ENCODE measurements at regions of chr21 and their contacts with region 1.

Region 1: GRCh38 chr21:37424396-37424795 is 57.8 kb downstream of the DYRK1A start:
- DNase-seq: no peak
- ATAC-seq: peak in 1 of 4 donors; percentile 24
- H3K4me3 ChIP-seq: no peak overlapping the region
- H3K27ac ChIP-seq: peak overlapping the region; percentile 56
- H3K4me1 ChIP-seq: peaks cover 74% of the 10 kb centered on the region
- H3K27me3 ChIP-seq: no peaks in the 10 kb centered on the region
- CTCF ChIP-seq: no peak

Region 2: GRCh38 chr21:37087188-37087587 is 337.2 kb before region 1 on chr21:
- intact Hi-C with region 1: no loop called
- DNase-seq: no peak
- ATAC-seq: peak; percentile 68 to 87 (median 79)
- H3K4me3 ChIP-seq: no peak overlapping the region
- H3K27ac ChIP-seq: peak overlapping the region; percentile 51
- H3K4me1 ChIP-seq: peaks cover 29% of the 10 kb centered on the region
- H3K27me3 ChIP-seq: no peaks in the 10 kb centered on the region
- CTCF ChIP-seq: peak; percentile 36

Region 3: DNA sequence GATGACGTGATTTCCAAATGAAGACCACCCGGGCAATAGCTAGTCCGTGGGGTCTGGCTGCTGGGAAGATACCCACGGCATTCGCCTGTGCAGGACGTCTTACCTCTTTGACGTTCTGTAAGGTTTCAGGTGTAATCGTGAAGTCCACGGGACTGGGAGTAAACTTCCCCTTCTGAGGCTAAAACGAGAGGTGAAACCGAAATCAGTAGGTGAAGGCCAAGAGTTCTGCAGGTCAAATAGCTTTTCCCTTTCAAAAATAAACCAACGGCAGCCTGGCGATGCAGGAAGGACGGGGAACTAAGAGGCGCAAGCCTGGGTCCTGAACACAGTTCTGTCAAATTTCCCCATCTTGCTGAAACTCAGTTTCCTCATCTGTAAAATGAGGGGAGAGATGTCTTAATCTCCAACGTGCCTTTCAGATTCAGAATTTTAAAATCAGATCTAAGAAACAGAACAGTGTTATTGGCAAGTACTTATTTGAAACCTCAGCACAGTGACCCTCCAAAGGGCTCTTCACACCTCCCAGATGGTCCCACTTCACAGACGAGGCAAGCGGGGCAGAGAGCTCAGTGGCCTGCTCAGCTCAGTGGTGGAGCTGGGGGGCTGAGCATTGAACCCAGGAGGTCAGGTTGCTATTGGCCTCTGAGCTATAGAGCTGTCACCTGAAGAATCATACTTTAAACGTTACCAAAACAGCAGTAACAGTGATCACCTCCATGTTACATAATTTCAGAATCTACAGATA is 191.9 kb before region 1 on chr21:
- intact Hi-C with region 1: no loop called
- DNase-seq: no peak
- ATAC-seq: no peak
- H3K4me3 ChIP-seq: no peak overlapping the region
- H3K27ac ChIP-seq: no peak overlapping the region
- H3K4me1 ChIP-seq: no peaks in the 10 kb centered on the region
- H3K27me3 ChIP-seq: no peaks in the 10 kb centered on the region
- CTCF ChIP-seq: no peak

Region 4: DNA sequence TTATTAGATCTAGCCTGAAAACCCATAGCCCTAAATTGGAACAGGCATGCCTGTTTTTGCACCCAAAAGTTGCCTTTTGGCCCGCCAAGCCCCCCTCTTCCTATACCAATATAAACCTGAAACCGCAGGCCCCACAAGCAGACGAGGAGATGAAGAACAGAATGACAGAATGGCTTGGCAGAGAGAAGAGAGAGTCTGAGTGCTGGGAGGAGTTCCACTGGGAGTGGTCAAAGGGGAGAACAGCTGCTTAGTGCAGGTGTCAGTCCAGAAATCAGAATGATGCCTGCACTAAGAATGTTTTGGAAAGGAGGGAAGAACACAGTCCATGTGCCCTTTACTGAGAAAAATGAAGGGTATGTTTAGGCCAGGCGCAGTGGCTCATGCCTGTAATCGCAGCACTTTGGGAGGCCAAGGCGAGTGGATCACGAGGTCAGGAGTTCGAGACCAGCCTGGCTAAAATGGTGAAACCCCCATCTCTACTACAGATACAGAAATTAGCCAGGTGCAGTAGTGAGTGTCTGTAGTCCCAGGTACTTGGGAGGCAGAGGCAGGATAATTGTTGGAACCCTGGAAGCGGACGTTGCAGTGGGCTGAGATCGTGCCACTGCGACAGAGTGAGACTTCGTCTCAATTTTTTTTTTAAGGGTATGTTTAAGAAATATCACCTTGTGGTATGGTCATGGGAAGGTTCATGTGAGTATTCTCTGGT is 48.4 kb before region 1 on chr21:
- intact Hi-C with region 1: loop called in 1 of 2 experiments (anchors 5 kb)
- DNase-seq: no peak
- ATAC-seq: peak; percentile 79 to 86 (median 83)
- H3K4me3 ChIP-seq: no peak overlapping the region
- H3K27ac ChIP-seq: peak overlapping the region; percentile 99
- H3K4me1 ChIP-seq: peaks cover 94% of the 10 kb centered on the region
- H3K27me3 ChIP-seq: no peaks in the 10 kb centered on the region
- CTCF ChIP-seq: no peak

Region 5: GRCh38 chr21:37463083-37463801 is 38.8 kb after region 1 on chr21:
- intact Hi-C with region 1: no loop called
- DNase-seq: no peak
- ATAC-seq: peak; percentile 53 to 62 (median 58)
- H3K4me3 ChIP-seq: peak overlapping the region; percentile 30
- H3K27ac ChIP-seq: peak overlapping the region; percentile 61
- H3K4me1 ChIP-seq: peaks cover 64% of the 10 kb centered on the region
- H3K27me3 ChIP-seq: no peaks in the 10 kb centered on the region
- CTCF ChIP-seq: peak; percentile 52